CD4-positive, alpha-beta memory T cell (primary cell): ENCODE measurements at regions of chr1 and their contacts with region 1.

Region 1: DNA sequence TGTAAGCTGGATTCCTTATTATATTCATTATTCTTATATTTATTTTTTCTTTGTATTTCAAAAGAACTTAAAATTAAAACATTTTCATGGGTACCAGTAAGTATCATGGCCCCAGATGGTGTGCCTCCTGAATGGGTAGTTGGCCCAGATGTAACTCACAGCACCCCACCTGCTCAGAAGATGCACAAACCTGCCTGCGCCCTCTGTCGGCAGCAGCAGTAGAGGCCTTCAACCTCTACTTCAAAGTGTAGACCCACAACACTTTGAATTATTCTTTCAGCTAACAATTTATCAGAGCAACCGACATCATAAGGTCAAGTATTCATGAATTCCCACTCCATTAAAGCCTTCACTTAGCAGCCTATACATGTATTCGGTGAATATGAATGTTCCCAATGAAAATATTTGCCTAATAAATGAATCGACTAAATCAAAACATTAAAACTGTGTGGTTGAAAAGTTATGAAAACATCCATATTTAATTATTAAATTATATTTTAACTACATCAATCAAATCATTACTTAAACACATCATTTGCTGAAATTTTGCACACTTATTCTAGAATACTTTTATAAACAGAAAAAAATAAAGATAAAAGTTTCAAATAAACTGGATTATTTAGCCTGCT is 25.4 kb downstream of the PIGM start:
- DNase-seq: peak; percentile 59 to 69 (median 62)
- H3K4me3 ChIP-seq: no peak overlapping the region
- H3K4me3 Mint-ChIP-seq: no peak overlapping the region
- H3K27ac ChIP-seq: no peak overlapping the region
- H3K27ac Mint-ChIP-seq: peak overlapping the region in 1 of 7 donors; percentile 13
- H3K4me1 ChIP-seq: no peaks in the 10 kb centered on the region
- H3K4me1 Mint-ChIP-seq: no peaks in the 10 kb centered on the region
- H3K27me3 ChIP-seq: no peaks in the 10 kb centered on the region
- H3K27me3 Mint-ChIP-seq: peaks cover 1 to 5% of the 10 kb centered on the region in 2 donors

Region 2: DNA sequence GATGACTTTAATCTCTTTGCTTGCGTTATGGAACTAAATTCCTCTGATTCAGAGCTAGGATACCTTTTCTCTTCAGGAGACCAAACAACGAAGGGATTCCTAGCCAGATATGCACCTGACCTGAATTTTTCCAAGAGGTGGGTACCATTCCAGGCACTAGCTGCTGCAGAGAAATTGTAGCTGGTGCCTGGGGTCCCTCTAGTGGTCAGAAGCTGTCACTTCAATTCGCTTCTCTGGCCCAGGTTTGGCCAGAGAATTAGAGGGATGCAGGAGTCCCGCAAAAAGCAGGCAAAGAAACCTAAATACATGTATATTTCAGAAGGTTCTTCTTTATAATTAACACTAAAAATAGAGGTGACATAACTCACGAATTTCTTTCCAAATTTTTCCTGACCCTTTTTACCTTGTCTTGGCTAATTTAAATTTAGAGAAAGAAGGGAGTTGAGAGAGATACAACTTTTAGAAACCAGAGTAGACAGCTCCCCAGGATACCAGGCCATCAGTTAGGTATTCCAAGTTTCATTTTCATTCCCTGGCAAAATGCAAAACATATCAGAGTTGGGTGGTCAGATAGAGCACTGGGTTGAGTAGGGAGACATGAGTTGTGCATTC is 792.2 kb before region 1 on chr1:
- CTCF ChIA-PET with region 1: interaction called, 4 read pairs
- POLR2A ChIA-PET with region 1: no interaction called
- intact Hi-C with region 1: loop called (anchors 5 kb)
- DNase-seq: peak in 4 of 5 donors; percentile 12 to 27 (median 26)
- H3K4me3 ChIP-seq: no peak overlapping the region
- H3K4me3 Mint-ChIP-seq: no peak overlapping the region
- H3K27ac ChIP-seq: no peak overlapping the region
- H3K27ac Mint-ChIP-seq: no peak overlapping the region
- H3K4me1 ChIP-seq: no peaks in the 10 kb centered on the region
- H3K4me1 Mint-ChIP-seq: peaks cover 0 to 3% (median 0%) of the 10 kb centered on the region in 4 donors
- H3K27me3 ChIP-seq: peaks cover 7% of the 10 kb centered on the region
- H3K27me3 Mint-ChIP-seq: peaks cover 24 to 38% of the 10 kb centered on the region in 2 donors

Region 3: GRCh38 chr1:159483501-159483900 is 522.9 kb before region 1 on chr1:
- CTCF ChIA-PET with region 1: no interaction called
- POLR2A ChIA-PET with region 1: no interaction called
- intact Hi-C with region 1: no loop called
- DNase-seq: no peak
- H3K4me3 ChIP-seq: no peak overlapping the region
- H3K4me3 Mint-ChIP-seq: no peak overlapping the region
- H3K27ac ChIP-seq: no peak overlapping the region
- H3K27ac Mint-ChIP-seq: no peak overlapping the region
- H3K4me1 ChIP-seq: no peaks in the 10 kb centered on the region
- H3K4me1 Mint-ChIP-seq: no peaks in the 10 kb centered on the region
- H3K27me3 ChIP-seq: no peaks in the 10 kb centered on the region
- H3K27me3 Mint-ChIP-seq: peaks cover 5 to 8% of the 10 kb centered on the region in 2 donors

Region 4: GRCh38 chr1:159936273-159936904 is 70.0 kb before region 1 on chr1:
- CTCF ChIA-PET with region 1: interaction called, 120 read pairs
- POLR2A ChIA-PET with region 1: interaction called, 3 read pairs
- intact Hi-C with region 1: loop called (anchors 1 kb)
- DNase-seq: peak; percentile 69 to 81 (median 73)
- H3K4me3 ChIP-seq: no peak overlapping the region
- H3K4me3 Mint-ChIP-seq: peak overlapping the region in 1 of 8 donors; percentile 26
- H3K27ac ChIP-seq: no peak overlapping the region
- H3K27ac Mint-ChIP-seq: peak overlapping the region in 3 of 7 donors; percentile 40 to 68 (median 45)
- H3K4me1 ChIP-seq: peaks cover 15% of the 10 kb centered on the region
- H3K4me1 Mint-ChIP-seq: peaks cover 0 to 7% (median 3%) of the 10 kb centered on the region in 4 donors
- H3K27me3 ChIP-seq: no peaks in the 10 kb centered on the region
- H3K27me3 Mint-ChIP-seq: peaks cover 6 to 10% of the 10 kb centered on the region in 2 donors

Region 5: DNA sequence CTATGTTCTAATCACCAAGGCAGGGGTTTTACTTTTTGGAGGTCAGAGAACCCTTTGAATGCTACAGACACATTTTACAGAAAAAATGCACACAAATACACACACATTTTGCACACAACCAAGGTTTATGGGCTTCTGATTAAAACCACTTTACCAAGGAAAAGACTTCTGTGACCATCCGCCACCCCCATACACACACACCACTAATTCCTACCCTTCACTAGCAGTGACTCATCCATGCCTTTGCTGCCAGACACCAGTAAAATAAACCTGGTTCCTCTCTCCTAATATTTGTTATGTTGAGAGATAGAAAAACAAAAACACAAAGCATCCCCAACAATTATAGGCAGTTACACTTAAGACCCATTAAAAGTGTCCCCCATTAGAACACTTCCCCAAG is 12.5 kb after region 1 on chr1:
- CTCF ChIA-PET with region 1: interaction called, 58 read pairs
- POLR2A ChIA-PET with region 1: no interaction called
- intact Hi-C with region 1: no loop called
- DNase-seq: no peak
- H3K4me3 ChIP-seq: no peak overlapping the region
- H3K4me3 Mint-ChIP-seq: no peak overlapping the region
- H3K27ac ChIP-seq: no peak overlapping the region
- H3K27ac Mint-ChIP-seq: no peak overlapping the region
- H3K4me1 ChIP-seq: no peaks in the 10 kb centered on the region
- H3K4me1 Mint-ChIP-seq: no peaks in the 10 kb centered on the region
- H3K27me3 ChIP-seq: no peaks in the 10 kb centered on the region
- H3K27me3 Mint-ChIP-seq: peaks cover 2 to 3% of the 10 kb centered on the region in 2 donors

Region 6: GRCh38 chr1:160046494-160047110 is 40.2 kb after region 1 on chr1:
- CTCF ChIA-PET with region 1: interaction called, 14 read pairs
- POLR2A ChIA-PET with region 1: no interaction called
- intact Hi-C with region 1: no loop called
- DNase-seq: peak; percentile 27 to 48 (median 47)
- H3K4me3 ChIP-seq: no peak overlapping the region
- H3K4me3 Mint-ChIP-seq: peak overlapping the region; percentile 57 to 79 (median 70)
- H3K27ac ChIP-seq: no peak overlapping the region
- H3K27ac Mint-ChIP-seq: peak overlapping the region in 3 of 7 donors; percentile 31 to 62 (median 62)
- H3K4me1 ChIP-seq: peaks cover 10% of the 10 kb centered on the region
- H3K4me1 Mint-ChIP-seq: peaks cover 6 to 12% (median 9%) of the 10 kb centered on the region in 4 donors
- H3K27me3 ChIP-seq: no peaks in the 10 kb centered on the region
- H3K27me3 Mint-ChIP-seq: peaks cover 12 to 18% of the 10 kb centered on the region in 2 donors

Region 7: DNA sequence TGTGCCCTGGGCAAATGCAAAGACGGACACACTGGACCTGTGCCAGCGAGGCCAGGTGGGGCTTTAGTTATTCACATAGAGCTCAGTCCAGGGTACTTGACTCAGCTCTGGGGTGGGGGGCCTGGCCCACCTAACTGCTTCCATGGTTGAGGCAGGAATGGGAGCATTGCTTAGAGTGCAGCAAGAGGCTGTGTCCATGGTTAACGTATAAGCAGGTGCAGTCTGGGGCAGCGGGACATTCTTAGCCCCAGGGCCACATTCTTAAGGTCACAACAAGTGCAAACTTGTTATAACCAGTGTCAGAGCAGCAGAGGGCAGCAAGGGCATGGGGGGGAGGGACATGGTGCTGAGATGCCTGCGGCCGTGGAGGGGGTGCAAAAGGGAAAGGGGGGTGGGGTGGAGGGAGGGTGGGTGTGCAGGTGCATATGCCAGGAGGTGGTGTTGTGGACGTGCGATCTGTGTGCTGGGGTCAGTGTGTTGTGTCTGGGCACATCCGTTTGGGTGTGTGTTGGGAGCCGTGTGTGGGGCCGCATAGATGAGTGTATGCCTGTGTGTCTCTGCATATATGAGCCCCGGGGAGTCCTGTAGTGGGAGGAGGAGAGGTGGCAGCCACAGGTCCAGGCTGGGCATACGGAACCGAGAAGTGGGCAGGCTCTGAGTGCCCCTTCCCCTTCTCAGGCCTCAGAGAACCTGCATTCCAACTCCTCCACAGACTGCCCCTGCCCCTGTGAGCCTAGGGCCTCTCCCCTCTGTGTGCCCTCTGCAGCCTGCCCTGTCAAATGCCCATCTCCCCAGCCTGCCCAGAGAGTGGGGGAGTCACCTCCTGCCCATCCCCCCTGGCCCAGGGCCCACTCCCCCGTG is 55.2 kb after region 1 on chr1:
- CTCF ChIA-PET with region 1: no interaction called
- POLR2A ChIA-PET with region 1: no interaction called
- intact Hi-C with region 1: no loop called
- DNase-seq: no peak
- H3K4me3 ChIP-seq: no peak overlapping the region
- H3K4me3 Mint-ChIP-seq: no peak overlapping the region
- H3K27ac ChIP-seq: no peak overlapping the region
- H3K27ac Mint-ChIP-seq: no peak overlapping the region
- H3K4me1 ChIP-seq: no peaks in the 10 kb centered on the region
- H3K4me1 Mint-ChIP-seq: no peaks in the 10 kb centered on the region
- H3K27me3 ChIP-seq: no peaks in the 10 kb centered on the region
- H3K27me3 Mint-ChIP-seq: peaks cover 9 to 15% of the 10 kb centered on the region in 2 donors